ENCODE measurements at regions of chr11 and their contacts with region 1.

Region 1: DNA sequence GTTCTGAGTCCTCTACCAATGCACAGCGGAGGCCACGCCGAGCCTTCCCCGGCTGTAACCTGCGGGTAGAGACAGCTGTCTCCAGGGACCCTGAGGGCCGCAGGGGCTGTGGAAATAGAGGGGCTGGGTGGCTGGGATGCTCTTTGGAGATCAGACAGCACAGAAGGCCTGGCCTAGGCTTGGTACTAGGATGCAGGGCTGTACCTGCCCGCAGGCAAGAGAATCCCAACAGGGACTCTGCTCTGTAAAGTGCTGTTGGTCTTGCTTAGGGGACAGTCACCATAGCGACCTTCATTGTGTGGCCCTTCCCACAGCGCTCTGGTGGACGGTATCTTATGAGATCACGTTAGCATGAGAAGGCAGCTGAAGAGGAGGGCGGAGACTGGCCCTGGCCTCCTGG is 11.3 kb upstream of the KCNJ5 start:
- DNase-seq: no peak
- ATAC-seq: no peak
- H3K4me3 ChIP-seq: no peak overlapping the region
- H3K4me3 Mint-ChIP-seq: no peak overlapping the region
- H3K27ac ChIP-seq: no peak overlapping the region
- H3K27ac Mint-ChIP-seq: no peak overlapping the region
- H3K4me1 ChIP-seq: no peaks in the 10 kb centered on the region
- H3K4me1 Mint-ChIP-seq: no peaks in the 10 kb centered on the region
- H3K27me3 ChIP-seq: peaks cover 0 to 28% (median 16%) of the 10 kb centered on the region in 4 experiments
- H3K27me3 Mint-ChIP-seq: peaks cover 68% of the 10 kb centered on the region
- CTCF ChIP-seq: no peak

Region 2: DNA sequence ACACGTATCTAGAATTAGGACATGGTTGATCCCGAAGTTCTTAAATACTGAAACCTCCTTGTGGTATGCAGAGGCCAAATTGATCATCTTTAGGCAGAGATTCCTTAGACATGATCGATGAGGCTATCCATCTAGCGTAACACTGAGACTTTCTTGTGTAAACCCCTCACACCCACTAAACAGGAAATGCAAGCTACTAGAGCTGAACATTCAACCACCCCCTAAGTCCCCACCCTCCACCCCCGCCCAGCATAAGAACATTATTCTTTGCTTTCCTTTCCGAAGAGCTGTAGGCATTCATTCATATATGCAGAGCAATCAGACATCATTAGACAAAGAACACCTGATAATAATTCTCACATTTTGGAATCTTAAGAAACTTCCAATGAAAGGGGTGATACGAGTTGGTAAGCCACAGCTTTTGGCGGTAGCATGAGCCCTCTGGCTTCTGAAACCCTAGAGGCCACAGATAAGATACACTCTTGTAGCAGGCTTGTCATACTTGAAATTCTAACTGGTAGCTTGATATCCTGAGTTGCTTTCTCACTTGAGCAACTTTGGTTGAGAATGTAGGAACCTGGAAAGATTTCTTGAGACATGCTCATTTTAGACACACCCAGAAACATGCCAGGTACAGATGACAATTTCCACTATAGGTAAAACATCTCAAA is 143.7 kb before region 1 on chr11:
- CTCF ChIA-PET with region 1: no interaction called
- POLR2A ChIA-PET with region 1: no interaction called
- intact Hi-C with region 1: no loop called
- DNase-seq: peak; percentile 65
- ATAC-seq: peak; percentile 60
- H3K4me3 ChIP-seq: peak overlapping the region in 4 of 5 experiments; percentile 16 to 47 (median 28)
- H3K4me3 Mint-ChIP-seq: peak overlapping the region; percentile 87
- H3K27ac ChIP-seq: peak overlapping the region; percentile 66 to 80
- H3K27ac Mint-ChIP-seq: peak overlapping the region; percentile 90
- H3K4me1 ChIP-seq: peaks cover 99% of the 10 kb centered on the region in 2 donors
- H3K4me1 Mint-ChIP-seq: peaks cover 94% of the 10 kb centered on the region
- H3K27me3 ChIP-seq: no peaks in the 10 kb centered on the region
- H3K27me3 Mint-ChIP-seq: no peaks in the 10 kb centered on the region
- CTCF ChIP-seq: no peak

Region 3: DNA sequence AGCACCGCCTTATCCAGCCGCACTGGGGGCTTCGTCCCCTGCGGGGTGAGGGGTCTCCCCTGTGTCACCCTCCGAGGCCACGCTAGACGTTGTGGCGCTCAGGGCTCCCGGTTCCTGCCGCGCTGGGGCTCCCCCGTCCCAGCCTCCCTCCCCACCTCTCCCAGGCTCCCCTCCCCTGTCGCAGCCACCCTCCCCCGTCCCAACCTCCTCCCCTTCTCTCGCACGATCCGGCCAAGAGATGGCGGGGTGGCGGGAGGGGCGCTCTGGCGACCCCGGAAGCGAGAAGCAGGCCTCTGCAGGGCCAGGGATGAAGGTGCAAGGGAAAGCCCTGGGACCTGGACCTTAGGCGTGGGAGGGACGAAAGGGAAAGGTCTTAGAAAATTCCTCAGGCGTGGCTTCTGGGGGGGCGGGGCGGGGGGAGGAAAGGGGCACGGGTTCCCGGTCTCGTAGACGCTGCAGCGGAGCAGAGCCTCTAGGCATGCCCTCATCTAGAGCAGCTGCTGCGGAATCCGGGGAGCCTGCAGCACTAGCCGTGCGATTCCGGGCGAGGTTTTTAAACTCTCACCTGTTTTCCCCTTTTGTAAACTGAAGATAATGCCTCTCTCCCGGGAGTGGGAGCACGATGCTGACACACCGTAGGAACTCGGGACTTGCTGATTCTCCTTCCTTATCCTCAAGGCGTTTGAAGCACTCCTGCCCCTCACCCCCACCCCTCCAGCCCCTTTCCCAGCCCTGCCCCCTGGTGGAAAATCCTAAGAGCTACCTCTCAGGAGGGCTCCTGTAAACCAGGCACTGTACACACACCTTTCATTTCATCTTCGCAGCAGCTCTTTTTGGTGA is 25.7 kb after region 1 on chr11:
- CTCF ChIA-PET with region 1: interaction called, 89 read pairs
- POLR2A ChIA-PET with region 1: interaction called, 3 read pairs
- intact Hi-C with region 1: loop called (anchors 1 kb)
- DNase-seq: peak; percentile 60
- ATAC-seq: peak; percentile 57
- H3K4me3 ChIP-seq: peak overlapping the region; percentile 8 to 81 (median 59)
- H3K4me3 Mint-ChIP-seq: peak overlapping the region; percentile 81
- H3K27ac ChIP-seq: no peak overlapping the region
- H3K27ac Mint-ChIP-seq: peak overlapping the region; percentile 50
- H3K4me1 ChIP-seq: peaks cover 21 to 28% of the 10 kb centered on the region in 2 donors
- H3K4me1 Mint-ChIP-seq: peaks cover 26% of the 10 kb centered on the region
- H3K27me3 ChIP-seq: peaks cover 0 to 92% (median 57%) of the 10 kb centered on the region in 4 experiments
- H3K27me3 Mint-ChIP-seq: peaks cover 69% of the 10 kb centered on the region
- CTCF ChIP-seq: peak; percentile 60

Region 4: DNA sequence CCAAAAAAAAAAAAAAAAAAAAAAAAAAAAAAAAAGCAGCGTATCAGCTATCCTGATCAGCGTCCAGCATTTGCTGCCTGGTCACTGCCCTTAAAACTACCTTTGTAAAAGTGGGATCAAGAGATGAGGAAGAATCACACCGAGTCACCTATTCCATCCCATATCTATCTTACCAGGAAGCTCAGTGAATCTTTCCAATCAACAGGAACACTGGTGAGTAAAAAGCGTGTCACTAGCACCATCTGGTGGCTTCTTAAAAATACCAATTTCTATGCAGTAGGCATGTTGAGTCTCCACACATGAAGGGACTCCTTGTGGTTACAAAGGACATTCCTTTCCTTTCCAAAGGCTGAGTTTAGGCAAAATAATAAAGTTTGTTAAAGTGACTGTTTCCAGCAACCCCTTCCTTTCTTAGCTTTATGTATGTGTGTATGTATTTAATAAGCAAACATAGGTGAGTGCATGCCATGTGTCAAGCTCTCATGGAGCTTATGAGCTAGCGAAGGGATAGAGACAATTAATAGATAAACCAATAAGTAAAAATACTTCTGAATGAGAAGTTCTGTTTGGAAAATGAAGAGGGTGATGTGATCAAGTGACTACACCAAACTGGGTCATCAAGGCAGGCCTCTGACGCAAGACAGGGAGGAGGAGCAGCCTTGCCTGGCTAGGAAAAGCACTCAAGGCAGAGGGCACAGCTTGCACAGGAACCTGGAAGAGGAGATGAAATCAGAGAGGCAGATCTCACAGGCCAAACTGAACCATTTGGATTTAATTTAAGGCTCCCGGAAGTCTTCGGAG is 76.8 kb after region 1 on chr11:
- CTCF ChIA-PET with region 1: interaction called, 315 read pairs
- POLR2A ChIA-PET with region 1: no interaction called
- intact Hi-C with region 1: loop called (anchors 1 kb)
- DNase-seq: peak; percentile 73
- ATAC-seq: no peak
- H3K4me3 ChIP-seq: no peak overlapping the region
- H3K4me3 Mint-ChIP-seq: no peak overlapping the region
- H3K27ac ChIP-seq: no peak overlapping the region
- H3K27ac Mint-ChIP-seq: no peak overlapping the region
- H3K4me1 ChIP-seq: peaks cover 0 to 4% of the 10 kb centered on the region in 2 donors
- H3K4me1 Mint-ChIP-seq: peaks cover 2% of the 10 kb centered on the region
- H3K27me3 ChIP-seq: peaks cover 0 to 13% (median 1%) of the 10 kb centered on the region in 4 experiments
- H3K27me3 Mint-ChIP-seq: peaks cover 30% of the 10 kb centered on the region
- CTCF ChIP-seq: peak; percentile 86

Region 5: GRCh38 chr11:129061466-129062194 is 181.8 kb after region 1 on chr11:
- CTCF ChIA-PET with region 1: no interaction called
- POLR2A ChIA-PET with region 1: no interaction called
- intact Hi-C with region 1: no loop called
- DNase-seq: no peak
- ATAC-seq: no peak
- H3K4me3 ChIP-seq: no peak overlapping the region
- H3K4me3 Mint-ChIP-seq: no peak overlapping the region
- H3K27ac ChIP-seq: no peak overlapping the region
- H3K27ac Mint-ChIP-seq: no peak overlapping the region
- H3K4me1 ChIP-seq: no peaks in the 10 kb centered on the region
- H3K4me1 Mint-ChIP-seq: no peaks in the 10 kb centered on the region
- H3K27me3 ChIP-seq: no peaks in the 10 kb centered on the region
- H3K27me3 Mint-ChIP-seq: no peaks in the 10 kb centered on the region
- CTCF ChIP-seq: no peak